CD8-positive, alpha-beta memory T cell (primary cell): ENCODE measurements at regions of chr11 and their contacts with region 1.

Region 1: GRCh38 chr11:73779084-73779902 is 8.4 kb upstream of the MRPL48 start:
- DNase-seq: peak; percentile 95 to 98 (median 97)
- H3K4me3 ChIP-seq: peak overlapping the region; percentile 68
- H3K4me3 Mint-ChIP-seq: peak overlapping the region; percentile 92 to 98 (median 94)
- H3K27ac ChIP-seq: peak overlapping the region; percentile 88
- H3K27ac Mint-ChIP-seq: peak overlapping the region; percentile 94 to 100 (median 99)
- H3K4me1 ChIP-seq: peaks cover 11% of the 10 kb centered on the region
- H3K4me1 Mint-ChIP-seq: peaks cover 9 to 17% (median 14%) of the 10 kb centered on the region in 3 donors
- H3K27me3 ChIP-seq: no peaks in the 10 kb centered on the region
- H3K27me3 Mint-ChIP-seq: peaks cover 0 to 4% of the 10 kb centered on the region in 2 donors

Region 2: GRCh38 chr11:73760679-73761402 is 18.5 kb before region 1 on chr11 and contains the start of gene RAB6A:
- CTCF ChIA-PET with region 1: interaction called, 30 read pairs
- POLR2A ChIA-PET with region 1: interaction called, 71 read pairs
- DNase-seq: peak; percentile 99 to 100 (median 100)
- H3K4me3 ChIP-seq: peak within 1 kb of the TSS; percentile 83
- H3K4me3 Mint-ChIP-seq: peak within 1 kb of the TSS; percentile 78 to 94 (median 90)
- H3K27ac ChIP-seq: peak within 1 kb of the TSS; percentile 87
- H3K27ac Mint-ChIP-seq: peak within 1 kb of the TSS; percentile 85 to 98 (median 90)
- H3K4me1 ChIP-seq: peaks cover 31% of the 10 kb centered on the region
- H3K4me1 Mint-ChIP-seq: peaks cover 32 to 45% (median 45%) of the 10 kb centered on the region in 3 donors
- H3K27me3 ChIP-seq: no peaks in the 10 kb centered on the region
- H3K27me3 Mint-ChIP-seq: peaks cover 0 to 3% of the 10 kb centered on the region in 2 donors
- total RNA-seq, gene RAB6A: 66.9 to 69.9 TPM